Dorsolateral prefrontal cortex (tissue), 120 donors: ENCODE measurements at regions of chr11 and their contacts with region 1.

Region 1: GRCh38 chr11:118435893-118436624 is at the start of gene KMT2A:
- DNase-seq: peak; percentile 91 to 98 (median 95)
- H3K4me3 ChIP-seq: peak within 1 kb of the TSS; percentile 71 to 99 (median 94)
- H3K27ac ChIP-seq: peak within 1 kb of the TSS; percentile 78 to 98 (median 93)
- H3K27me3 ChIP-seq: no peaks in the 10 kb centered on the region
- CTCF ChIP-seq: peak in 23 of 56 donors; percentile 9 to 49 (median 26)
- total RNA-seq, gene KMT2A: 104 to 177 (median 133) TPM

Region 2: DNA sequence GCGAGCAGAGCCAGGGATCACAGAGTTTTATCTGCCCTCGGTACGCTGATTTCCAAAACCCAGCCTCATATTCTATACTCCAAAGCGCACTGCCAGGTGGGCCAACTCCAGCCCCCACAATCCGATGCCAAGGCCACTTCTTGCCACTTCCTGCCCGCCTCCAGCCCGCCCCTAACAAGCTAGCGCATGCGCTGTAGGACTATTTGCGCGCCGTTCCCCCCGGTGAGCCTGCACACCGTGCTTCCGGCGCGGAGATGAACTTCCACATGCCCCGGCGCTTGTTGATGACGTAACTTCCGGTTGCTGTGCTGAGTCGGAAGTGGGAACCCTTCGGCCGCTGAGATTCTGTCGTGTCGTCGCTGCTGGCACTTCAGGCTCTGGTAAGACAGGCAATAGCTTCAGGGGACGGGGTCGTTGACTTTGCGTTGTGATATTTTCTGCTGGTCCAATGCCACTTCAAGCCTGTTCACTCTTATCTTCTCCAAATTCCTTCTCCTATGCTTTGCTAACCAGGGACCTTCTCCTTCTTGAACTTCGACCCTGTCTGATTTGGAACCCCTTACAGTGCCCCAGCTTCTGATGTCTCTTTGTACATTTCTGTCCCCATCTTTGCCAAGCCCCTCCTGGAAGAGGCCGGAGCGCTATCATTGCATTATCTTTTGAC is 76.6 kb before region 1 on chr11 and contains the start of gene UBE4A:
- intact Hi-C with region 1: loop called in 1 of 2 experiments (anchors 2 kb)
- DNase-seq: peak; percentile 91 to 96 (median 94)
- H3K4me3 ChIP-seq: peak within 1 kb of the TSS; percentile 54 to 99 (median 87)
- H3K27ac ChIP-seq: peak within 1 kb of the TSS in 46 of 59 donors; percentile 10 to 85 (median 54)
- H3K27me3 ChIP-seq: no peaks in the 10 kb centered on the region
- CTCF ChIP-seq: peak in 34 of 56 donors; percentile 4 to 62 (median 34)
- total RNA-seq, gene UBE4A: 41.4 to 68.0 (median 57.4) TPM

Region 3: DNA sequence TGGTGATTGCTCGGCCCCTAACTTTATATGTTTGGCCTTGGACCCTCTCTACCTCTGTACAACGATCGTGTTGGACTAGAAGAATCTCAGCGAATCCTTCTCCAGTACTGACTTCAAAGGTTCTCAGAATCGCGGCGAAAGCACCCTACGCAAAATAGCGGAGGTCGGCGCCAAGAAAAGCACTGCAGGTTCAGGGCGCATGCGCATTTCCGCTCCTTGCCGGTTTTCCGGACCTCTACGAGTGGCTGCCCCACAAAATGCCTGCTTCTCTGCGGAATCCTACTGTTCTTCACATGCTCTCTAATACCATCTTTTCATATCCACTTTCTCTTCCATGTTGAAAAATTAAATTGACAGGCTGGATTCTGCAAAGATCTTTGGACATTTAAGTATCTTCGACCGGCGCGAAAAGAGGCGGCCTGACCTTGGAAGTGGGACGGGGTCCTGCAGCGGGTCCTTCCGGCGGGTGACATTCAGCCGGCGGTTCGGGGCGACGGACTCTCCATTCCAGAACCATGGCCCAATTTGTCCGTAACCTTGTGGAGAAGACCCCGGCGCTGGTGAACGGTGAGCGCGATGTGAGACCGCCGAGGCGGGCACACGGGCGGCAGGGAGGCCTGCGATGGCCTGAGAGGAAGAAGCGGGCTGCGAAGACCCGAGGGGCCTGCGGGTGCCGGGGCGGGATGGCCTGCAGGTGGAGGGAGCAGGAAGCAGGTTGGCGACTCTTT is 34.7 kb before region 1 on chr11 and contains the start of gene ATP5MG:
- intact Hi-C with region 1: loop called (anchors 2 kb)
- DNase-seq: peak; percentile 82 to 91 (median 88)
- H3K4me3 ChIP-seq: peak within 1 kb of the TSS; percentile 61 to 100 (median 91)
- H3K27ac ChIP-seq: peak within 1 kb of the TSS; percentile 52 to 99 (median 95)
- H3K27me3 ChIP-seq: no peaks in the 10 kb centered on the region
- CTCF ChIP-seq: peak in 29 of 56 donors; percentile 8 to 44 (median 21)
- total RNA-seq, gene ATP5MG: 79.3 to 209 (median 146) TPM

Region 4: DNA sequence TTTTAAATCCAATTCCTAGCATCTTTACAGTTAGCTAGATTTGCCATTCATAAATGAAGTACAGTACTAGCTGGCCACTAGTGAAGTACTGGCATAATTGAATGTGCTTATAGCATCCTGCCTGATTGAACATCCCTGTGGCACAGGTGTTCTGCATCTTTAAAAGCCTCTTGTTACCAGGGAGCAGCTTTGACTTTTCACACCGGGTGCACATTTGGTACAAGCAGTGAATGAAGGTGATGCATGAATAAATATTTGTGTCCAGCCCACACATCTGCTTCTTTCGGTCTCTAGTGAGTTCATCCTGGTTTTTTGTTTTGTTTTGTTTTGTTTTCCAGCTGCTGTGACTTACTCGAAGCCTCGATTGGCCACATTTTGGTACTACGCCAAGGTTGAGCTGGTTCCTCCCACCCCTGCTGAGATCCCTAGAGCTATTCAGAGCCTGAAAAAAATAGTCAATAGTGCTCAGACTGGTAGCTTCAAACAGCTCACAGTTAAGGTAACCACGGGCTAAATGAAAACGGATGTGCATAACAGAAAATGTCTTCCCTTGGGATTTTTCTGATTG is 29.4 kb before region 1 on chr11:
- intact Hi-C with region 1: loop called (anchors 2 kb)
- DNase-seq: no peak
- H3K4me3 ChIP-seq: peak overlapping the region in 1 of 59 donors; percentile 10
- H3K27ac ChIP-seq: peak overlapping the region in 30 of 59 donors; percentile 1 to 71 (median 33)
- H3K27me3 ChIP-seq: no peaks in the 10 kb centered on the region
- CTCF ChIP-seq: no peak

Region 5: GRCh38 chr11:118476676-118477075 is 40.6 kb after region 1 on chr11:
- intact Hi-C with region 1: loop called (anchors 5 kb)
- DNase-seq: no peak
- H3K4me3 ChIP-seq: no peak overlapping the region
- H3K27ac ChIP-seq: no peak overlapping the region
- H3K27me3 ChIP-seq: no peaks in the 10 kb centered on the region
- CTCF ChIP-seq: no peak

Region 6: DNA sequence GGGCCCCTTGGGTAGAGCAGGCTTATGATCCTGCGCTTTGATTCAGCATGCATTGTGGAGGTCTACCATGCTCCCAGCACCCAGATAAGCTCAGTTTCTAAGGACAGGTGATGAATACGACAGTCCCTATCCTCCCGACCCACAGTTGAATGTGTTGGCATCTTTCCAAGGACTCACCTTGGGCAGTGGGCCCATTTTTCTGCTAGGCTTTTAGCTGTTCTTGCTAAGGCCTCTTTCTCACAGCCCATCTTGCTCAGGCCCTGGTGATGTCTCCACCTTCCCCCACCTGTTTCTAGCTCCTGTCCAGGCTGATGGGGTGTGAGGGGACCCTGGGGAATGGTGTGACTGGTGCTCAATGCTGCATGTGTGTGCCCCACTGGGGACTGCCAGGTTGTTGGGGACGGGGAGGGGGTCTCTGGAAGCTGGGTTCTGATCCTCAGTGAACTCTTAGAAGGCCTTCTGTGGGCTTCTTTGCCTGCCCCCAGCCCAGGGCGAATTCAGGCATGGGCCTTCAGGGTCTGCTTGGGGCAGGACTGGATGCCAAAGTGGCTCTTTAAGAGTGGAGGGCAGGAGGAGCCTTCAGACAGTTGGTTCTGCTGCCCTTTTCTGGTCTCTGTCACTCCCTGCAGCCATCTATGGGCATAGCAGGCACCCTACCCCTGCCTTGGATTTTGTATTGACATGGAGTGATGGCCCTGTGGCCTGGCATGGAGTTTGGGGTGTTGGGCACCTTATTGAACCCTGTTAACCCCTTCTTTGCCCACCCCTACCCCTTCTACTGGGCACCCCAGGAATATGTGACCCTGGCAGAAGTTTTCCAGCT is 204.5 kb after region 1 on chr11:
- intact Hi-C with region 1: no loop called
- DNase-seq: no peak
- H3K4me3 ChIP-seq: no peak overlapping the region
- H3K27ac ChIP-seq: peak overlapping the region in 34 of 59 donors; percentile 5 to 73 (median 46)
- H3K27me3 ChIP-seq: no peaks in the 10 kb centered on the region
- CTCF ChIP-seq: peak in 17 of 56 donors; percentile 5 to 36 (median 12)